ENCODE measurements at regions of chr13 and their contacts with region 1.

Region 1: GRCh38 chr13:40069173-40070044 is 413.9 kb downstream of the COG6 start:
- DNase-seq: peak; percentile 70 to 79 (median 72)
- H3K4me3 ChIP-seq: no peak overlapping the region
- H3K27ac ChIP-seq: no peak overlapping the region
- H3K4me1 ChIP-seq: peaks cover 0 to 5% (median 2%) of the 10 kb centered on the region in 4 experiments
- H3K27me3 ChIP-seq: no peaks in the 10 kb centered on the region

Region 2: DNA sequence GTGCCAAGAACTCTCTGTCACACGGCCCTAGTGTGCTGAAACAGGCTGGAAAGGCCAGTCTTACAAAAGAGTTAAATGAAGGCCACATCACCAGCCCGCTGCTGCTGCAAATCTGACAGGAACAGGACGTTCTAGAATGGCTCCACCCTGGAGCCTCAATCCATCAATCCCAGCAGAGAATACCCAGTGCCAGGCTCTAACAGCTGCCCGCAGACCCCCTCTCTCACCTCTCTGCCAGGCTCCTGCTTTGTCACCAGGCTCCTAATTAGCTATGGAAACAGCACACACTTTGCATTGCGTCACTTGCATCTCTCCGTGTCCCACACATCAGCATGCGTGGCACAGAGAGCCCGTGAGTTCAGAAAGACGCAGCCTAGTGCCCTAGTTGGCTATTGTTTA is 283.0 kb after region 1 on chr13:
- CTCF ChIA-PET with region 1: no interaction called
- POLR2A ChIA-PET with region 1: no interaction called
- DNase-seq: no peak
- H3K4me3 ChIP-seq: no peak overlapping the region
- H3K27ac ChIP-seq: no peak overlapping the region
- H3K4me1 ChIP-seq: no peaks in the 10 kb centered on the region
- H3K27me3 ChIP-seq: no peaks in the 10 kb centered on the region

Region 3: GRCh38 chr13:40362502-40362901 is 293.1 kb after region 1 on chr13:
- CTCF ChIA-PET with region 1: no interaction called
- POLR2A ChIA-PET with region 1: no interaction called
- DNase-seq: no peak
- H3K4me3 ChIP-seq: no peak overlapping the region
- H3K27ac ChIP-seq: no peak overlapping the region
- H3K4me1 ChIP-seq: no peaks in the 10 kb centered on the region
- H3K27me3 ChIP-seq: no peaks in the 10 kb centered on the region

Region 4: GRCh38 chr13:40666905-40667621 is 597.7 kb after region 1 on chr13:
- CTCF ChIA-PET with region 1: interaction called, 11 read pairs
- POLR2A ChIA-PET with region 1: no interaction called
- DNase-seq: peak; percentile 54 to 86 (median 81)
- H3K4me3 ChIP-seq: peak overlapping the region; percentile 68 to 92 (median 83)
- H3K27ac ChIP-seq: peak overlapping the region; percentile 50 to 81
- H3K4me1 ChIP-seq: peaks cover 12 to 39% (median 29%) of the 10 kb centered on the region in 4 experiments
- H3K27me3 ChIP-seq: no peaks in the 10 kb centered on the region

Measured in common myeloid progenitor, CD34-positive (primary cell).